ENCODE measurements at regions of chr3 and their contacts with region 1.

Region 1: DNA sequence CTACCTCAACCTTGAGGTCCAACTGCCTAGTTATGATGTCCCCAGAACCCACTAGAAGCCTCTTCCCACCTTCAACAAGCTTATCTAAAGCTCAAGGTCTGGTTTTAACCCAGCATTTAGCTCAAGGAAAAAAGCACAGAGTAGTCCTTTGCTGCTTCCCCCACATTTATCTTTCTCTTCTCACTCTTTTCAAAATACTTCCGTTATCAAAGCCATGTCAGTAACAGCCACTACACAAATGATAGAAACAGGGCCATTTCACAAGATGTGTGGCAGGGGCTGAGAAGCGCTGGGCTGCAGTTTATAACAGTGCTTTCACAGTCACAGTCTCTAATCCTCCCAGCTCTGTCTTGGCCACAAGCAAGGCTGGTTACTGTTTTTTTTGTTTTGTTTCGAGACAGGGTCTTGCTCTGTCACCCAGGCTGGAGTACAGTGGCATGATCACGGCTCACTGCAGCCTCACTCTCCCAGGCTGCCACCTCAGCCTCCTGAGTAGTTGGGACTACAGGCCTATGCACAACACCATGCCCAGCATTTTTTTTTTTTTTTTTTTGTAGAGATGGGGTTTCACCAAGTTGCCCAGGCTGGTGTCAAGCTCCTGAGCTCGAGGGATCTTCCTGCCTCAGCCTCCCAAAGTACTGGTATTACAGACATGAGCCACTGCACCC is 218.8 kb downstream of the OSBPL10 start:
- DNase-seq: no peak
- ATAC-seq: no peak
- H3K4me3 Mint-ChIP-seq: no peak overlapping the region
- H3K27ac Mint-ChIP-seq: peak overlapping the region; percentile 1
- H3K4me1 Mint-ChIP-seq: peaks cover 63% of the 10 kb centered on the region
- H3K27me3 Mint-ChIP-seq: no peaks in the 10 kb centered on the region
- CTCF ChIP-seq: no peak

Region 2: GRCh38 chr3:31472479-31473390 is 289.5 kb before region 1 on chr3:
- CTCF ChIA-PET with region 1: no interaction called
- POLR2A ChIA-PET with region 1: no interaction called
- intact Hi-C with region 1: no loop called
- DNase-seq: no peak
- ATAC-seq: no peak
- H3K4me3 Mint-ChIP-seq: no peak overlapping the region
- H3K27ac Mint-ChIP-seq: no peak overlapping the region
- H3K4me1 Mint-ChIP-seq: peaks cover 7% of the 10 kb centered on the region
- H3K27me3 Mint-ChIP-seq: no peaks in the 10 kb centered on the region
- CTCF ChIP-seq: no peak

Region 3: DNA sequence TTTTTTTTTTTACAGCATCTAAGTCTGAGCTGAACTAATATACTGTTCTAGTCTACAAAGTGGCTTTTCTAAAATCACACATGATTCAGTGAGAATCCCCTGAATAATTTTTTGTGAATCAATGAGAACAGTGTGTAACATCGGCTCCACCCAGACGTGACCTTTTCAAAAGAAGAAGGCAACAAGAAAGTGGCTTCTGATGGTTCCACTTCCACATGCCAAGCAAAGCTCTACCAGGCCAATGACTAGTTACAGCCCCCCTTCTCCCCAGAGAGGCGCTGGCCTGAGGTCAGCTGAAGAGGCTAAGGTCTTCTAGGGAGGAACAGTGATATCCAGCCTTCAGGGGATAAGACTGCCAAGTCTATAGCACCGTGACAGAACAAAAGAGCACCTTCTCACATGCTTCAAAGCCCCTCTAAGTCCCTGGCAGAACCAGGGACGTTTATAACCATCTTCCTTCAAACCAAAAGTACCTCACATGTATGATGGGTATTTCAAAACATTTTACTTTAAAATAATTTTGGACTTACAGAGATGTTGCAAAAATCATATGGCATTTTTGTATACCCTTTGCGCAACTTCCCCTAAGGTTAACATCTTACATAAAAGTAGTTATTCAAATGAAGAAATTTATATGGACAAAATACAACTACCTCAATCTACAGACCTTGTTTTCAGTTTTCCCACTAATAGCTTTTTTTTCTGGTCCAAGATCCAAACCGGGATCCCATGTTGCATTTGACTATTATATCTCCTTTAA is 40.9 kb after region 1 on chr3:
- CTCF ChIA-PET with region 1: no interaction called
- POLR2A ChIA-PET with region 1: no interaction called
- intact Hi-C with region 1: loop called (anchors 5 kb)
- DNase-seq: peak; percentile 35
- ATAC-seq: peak; percentile 87
- H3K4me3 Mint-ChIP-seq: peak overlapping the region; percentile 7
- H3K27ac Mint-ChIP-seq: peak overlapping the region; percentile 73
- H3K4me1 Mint-ChIP-seq: peaks cover 47% of the 10 kb centered on the region
- H3K27me3 Mint-ChIP-seq: no peaks in the 10 kb centered on the region
- CTCF ChIP-seq: no peak

Measured in activated B cell treated with CpG ODN at 0.5 μM for 24 hours (primary cell).